ENCODE measurements at regions of chr15 and their contacts with region 1.

Region 1: GRCh38 chr15:77118882-77119321 is 48.0 kb upstream of the TSPAN3 start:
- DNase-seq: peak; percentile 70
- H3K4me3 ChIP-seq: no peak overlapping the region
- H3K27ac ChIP-seq: no peak overlapping the region
- H3K27me3 ChIP-seq: no peaks in the 10 kb centered on the region
- CTCF ChIP-seq: peak; percentile 85

Region 2: DNA sequence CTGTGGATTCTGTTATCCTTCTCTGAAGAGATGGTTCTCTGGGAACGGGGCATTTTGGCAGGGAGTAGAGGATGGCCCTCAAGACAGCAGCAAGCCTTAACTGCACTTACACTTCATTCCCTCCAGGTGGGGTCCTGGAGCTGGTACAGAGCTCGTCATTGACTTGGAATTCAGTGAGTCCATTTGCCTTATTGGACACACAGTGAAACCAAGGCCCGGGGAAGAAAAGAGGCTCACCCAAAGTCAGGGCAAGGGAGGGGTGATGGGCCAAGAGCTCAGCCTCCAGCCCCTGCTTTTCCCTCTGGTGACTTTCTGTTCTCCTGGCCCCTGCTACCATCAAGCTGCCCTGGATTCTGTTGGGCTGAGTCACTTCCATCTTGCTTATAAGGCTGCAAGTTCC is 933.2 kb before region 1 on chr15:
- in situ Hi-C with region 1: no loop called
- DNase-seq: peak; percentile 68
- H3K4me3 ChIP-seq: no peak overlapping the region
- H3K27ac ChIP-seq: no peak overlapping the region
- H3K27me3 ChIP-seq: no peaks in the 10 kb centered on the region
- CTCF ChIP-seq: peak; percentile 87

Region 3: GRCh38 chr15:77543159-77543882 is 424.4 kb after region 1 on chr15:
- in situ Hi-C with region 1: loop called (anchors 25 kb)
- DNase-seq: peak; percentile 65
- H3K4me3 ChIP-seq: peak overlapping the region; percentile 58
- H3K27ac ChIP-seq: no peak overlapping the region
- H3K27me3 ChIP-seq: no peaks in the 10 kb centered on the region
- CTCF ChIP-seq: peak; percentile 97

Measured in brain microvascular endothelial cell (primary cell).